Left ventricle myocardium inferior (tissue), 1 donor: ENCODE measurements at regions of chr9 and their contacts with region 1.

Region 1: DNA sequence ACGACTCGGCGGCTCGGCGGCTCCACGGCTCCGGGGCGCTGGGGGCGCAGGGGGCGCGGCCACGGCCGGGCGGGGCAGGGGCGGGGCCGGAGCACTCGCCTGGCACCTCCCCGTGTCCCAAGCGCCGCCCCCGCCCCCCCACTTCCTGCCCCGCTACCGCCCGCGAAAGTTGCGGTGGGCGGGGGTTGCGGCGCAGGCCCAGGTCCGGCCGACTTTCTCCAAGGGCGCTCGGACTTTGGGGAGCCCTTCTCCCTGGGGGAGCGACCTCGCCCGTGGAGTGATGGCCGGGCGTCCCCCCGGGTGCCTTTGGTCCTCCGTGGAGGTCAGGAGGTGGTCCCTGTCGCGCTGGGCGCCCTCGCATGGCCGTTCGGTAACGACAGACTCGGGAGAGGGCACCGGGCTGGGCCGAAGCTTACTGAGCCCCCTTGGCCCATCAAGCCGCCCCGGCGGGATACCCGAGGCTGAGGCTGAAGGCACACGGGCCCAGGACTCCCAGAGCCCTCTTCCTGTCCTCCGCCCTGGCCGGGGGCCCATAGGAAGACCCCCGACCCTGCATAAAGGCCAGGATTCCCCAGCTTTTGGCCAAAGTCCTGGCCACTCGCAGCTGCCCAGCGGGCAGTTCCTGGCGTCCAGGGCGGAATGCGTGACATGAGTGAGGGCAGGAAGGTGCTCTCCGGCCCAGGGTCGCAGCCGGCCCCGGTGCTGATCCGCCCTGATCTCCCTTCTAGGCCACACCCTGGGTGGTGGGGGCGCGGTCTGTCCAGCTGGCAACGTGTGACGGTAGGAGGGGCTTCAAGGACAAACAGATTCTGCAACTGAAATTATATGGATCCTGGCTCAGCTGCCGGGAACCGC is 883 bp upstream of the VAV2 start:
- DNase-seq: peak; percentile 86
- H3K4me3 ChIP-seq: peak overlapping the region; percentile 70
- H3K27ac ChIP-seq: peak overlapping the region; percentile 93
- H3K4me1 ChIP-seq: peaks cover 35% of the 10 kb centered on the region
- H3K27me3 ChIP-seq: peaks cover 15% of the 10 kb centered on the region
- CTCF ChIP-seq: peak; percentile 52

Region 2: DNA sequence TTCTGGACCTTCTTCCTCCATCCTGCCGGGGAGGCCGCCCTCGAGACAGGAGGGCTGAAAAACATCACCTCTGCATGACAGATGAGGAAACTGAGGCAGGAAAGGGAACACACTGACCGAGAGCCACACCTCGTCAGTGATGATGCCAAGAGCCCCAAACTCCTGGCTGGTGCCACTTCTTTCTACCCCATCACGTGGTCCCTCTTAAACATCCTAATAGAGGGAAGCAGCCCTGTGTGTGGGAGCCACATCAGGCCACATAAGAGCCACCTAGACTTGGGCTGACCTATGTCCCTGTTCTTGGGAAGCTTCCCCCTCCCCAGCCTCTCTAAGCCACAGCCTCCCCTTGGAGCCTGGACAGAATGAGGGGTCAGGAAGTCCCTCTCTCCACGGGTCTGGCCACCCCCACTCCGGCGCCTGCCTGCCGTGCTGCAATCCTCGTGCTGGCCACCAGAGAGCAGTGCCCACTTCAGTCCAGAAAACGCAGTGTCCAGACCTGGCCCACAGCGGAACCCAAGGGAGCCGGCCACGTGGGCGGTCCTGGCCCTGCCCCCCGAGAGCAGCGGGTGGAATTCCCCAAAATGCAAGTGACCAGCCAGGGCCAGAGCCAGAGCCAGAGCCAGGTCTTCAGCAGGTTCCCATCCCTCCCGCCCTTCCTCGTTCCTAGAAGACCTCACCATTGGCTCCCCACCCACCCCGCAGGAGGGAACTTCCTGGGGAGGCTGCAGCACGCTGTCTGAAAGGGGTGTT is 200.1 kb before region 1 on chr9:
- intact Hi-C with region 1: loop called (anchors 5 kb)
- DNase-seq: peak; percentile 79
- H3K4me3 ChIP-seq: peak overlapping the region; percentile 21
- H3K27ac ChIP-seq: no peak overlapping the region
- H3K4me1 ChIP-seq: peaks cover 35% of the 10 kb centered on the region
- H3K27me3 ChIP-seq: no peaks in the 10 kb centered on the region
- CTCF ChIP-seq: peak; percentile 99